ENCODE measurements at regions of chr3 and their contacts with region 1.

Region 1: DNA sequence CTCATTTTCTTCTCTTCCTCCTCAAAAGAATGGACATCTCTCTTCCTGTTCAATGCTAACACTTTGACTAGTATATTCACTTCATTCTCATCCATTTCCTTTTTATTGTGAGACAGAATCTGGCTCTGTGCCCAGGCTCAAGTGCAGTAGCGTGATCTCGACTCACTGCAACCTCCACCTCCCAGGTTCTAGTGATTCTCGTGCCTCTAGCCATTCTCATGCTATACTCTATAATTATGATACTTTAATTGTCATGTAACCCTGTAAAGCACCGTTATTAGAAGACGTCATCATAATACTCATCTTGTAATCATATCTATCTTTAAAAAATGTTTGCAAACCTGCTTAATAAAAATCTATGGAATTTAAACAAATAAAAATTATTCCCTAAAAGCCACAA is 107.0 kb downstream of the SHOX2 start:
- DNase-seq: no peak

Region 2: DNA sequence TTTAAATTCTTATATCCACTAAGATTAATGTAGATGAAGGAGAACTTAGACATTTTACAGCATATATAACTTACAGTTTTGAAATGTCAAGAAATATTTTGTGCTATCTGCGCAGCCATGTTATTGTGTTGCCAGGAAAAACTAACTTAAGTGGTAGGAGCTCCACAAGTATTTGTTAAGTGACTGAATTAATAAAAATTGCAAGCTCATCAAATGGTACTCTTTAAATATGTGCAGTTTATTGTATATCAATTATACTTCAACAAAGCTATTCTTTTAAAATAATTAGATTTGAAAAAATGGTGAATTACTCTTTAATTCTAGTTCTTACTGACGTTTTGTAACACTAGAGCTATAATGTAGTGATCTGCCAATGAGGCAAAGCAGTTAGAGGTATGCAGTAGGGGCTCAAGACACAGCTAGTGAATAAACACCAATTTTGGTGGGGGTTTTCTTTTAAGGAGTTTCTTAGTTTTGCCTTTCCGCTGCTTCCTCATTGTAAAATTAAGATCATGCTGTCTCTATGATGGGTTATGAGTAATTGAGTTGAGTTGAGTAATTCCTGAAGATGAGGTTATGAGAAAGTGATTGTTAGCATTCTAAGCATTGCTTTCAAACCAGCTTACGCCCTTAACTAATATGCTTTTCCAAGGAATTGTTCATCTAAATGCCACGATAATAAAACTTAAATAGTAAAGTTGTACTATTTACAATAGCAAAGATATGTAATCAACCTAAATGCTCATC is 684.1 kb after region 1 on chr3:
- intact Hi-C with region 1: no loop called
- DNase-seq: no peak

Region 3: GRCh38 chr3:158821837-158822236 is 822.6 kb after region 1 on chr3:
- intact Hi-C with region 1: loop called in 1 of 2 experiments (anchors 10 kb)
- DNase-seq: no peak